Cardiac septum (tissue), 1 donor: ENCODE measurements at regions of chr5 and their contacts with region 1.

Region 1: GRCh38 chr5:35926389-35927051 is 11.9 kb downstream of the CAPSL start:
- DNase-seq: no peak

Region 2: GRCh38 chr5:35089334-35090314 is 836.9 kb before region 1 on chr5:
- intact Hi-C with region 1: loop called (anchors 2 kb)
- DNase-seq: no peak

Region 3: DNA sequence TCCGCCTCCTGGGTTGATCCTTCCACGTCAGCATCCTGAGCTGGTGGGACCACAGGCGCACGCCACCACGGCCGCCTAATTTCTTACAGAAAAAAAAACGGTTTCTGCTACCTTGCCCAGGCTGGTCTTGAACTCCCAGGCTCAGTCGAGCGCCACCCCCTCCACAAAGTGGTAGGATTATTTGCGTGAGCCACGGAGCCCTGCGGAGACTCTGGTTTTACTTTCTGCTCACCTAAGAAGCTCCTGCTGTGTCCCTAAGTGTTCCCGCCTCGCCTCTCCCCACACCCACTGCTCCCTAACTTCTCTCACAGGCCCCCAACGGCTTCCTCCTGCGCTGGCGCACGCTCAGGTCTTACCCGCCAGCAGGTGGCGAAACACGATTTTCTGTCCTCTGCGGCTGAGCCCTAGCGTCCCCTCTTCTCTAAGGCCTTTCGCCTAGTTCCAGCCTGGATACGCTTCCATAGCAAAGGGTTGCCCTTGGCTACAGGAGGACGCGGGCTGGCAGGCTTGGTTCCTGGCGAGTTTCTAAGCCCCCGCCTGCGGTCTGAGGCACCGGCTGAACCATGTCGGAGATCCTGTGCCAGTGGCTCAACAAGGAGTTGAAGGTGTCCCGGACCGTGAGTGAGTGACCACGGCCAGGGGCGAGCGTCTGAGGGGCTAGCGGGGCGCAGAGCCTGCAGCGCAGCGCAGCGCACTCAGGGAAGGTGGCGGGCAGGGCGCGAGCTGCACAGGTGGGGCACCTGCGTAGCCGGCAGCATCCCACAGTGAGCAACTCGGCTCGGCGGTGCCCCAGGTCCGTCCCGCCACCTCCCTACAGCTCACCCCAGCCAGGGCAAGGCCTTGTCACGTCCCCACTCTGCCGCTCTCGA is 308.9 kb before region 1 on chr5 and contains the start of gene SPEF2:
- intact Hi-C with region 1: loop called (anchors 5 kb)
- DNase-seq: peak; percentile 89
- total RNA-seq, gene SPEF2: 2.2 TPM

Region 4: DNA sequence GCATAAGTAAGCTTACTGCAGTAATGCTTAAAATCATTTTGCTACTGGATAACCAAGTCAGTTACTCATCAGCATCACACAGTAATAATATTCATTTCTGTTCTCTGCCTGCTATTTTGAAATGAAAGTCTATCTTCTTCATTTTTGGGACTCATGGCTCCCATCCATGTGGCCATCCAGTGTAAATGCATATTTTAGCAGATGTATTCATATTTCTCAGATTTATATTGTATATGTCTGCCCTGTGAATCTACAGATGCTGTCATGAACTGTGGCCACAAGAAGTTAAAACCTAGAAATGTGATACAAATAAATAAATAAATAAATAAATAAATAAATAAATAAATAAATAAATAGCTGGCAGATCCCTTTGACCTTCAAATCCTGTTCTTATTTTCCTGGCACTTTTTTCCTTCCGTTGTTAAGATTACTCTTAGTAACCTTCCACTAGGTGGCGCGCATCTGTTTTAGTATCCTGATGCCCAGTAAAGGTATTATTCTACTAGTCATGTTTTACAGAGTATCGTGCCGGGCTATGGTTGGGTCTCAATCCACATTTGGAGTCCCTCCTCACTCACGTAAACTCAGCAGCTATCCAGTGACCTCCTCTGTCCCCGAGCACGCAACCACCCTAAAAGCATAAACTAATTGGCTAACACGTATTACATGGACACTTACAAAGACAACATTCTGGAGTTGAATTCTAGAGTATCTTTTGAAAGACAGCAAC is 149.0 kb before region 1 on chr5:
- intact Hi-C with region 1: loop called (anchors 2 kb)
- DNase-seq: no peak

Region 5: DNA sequence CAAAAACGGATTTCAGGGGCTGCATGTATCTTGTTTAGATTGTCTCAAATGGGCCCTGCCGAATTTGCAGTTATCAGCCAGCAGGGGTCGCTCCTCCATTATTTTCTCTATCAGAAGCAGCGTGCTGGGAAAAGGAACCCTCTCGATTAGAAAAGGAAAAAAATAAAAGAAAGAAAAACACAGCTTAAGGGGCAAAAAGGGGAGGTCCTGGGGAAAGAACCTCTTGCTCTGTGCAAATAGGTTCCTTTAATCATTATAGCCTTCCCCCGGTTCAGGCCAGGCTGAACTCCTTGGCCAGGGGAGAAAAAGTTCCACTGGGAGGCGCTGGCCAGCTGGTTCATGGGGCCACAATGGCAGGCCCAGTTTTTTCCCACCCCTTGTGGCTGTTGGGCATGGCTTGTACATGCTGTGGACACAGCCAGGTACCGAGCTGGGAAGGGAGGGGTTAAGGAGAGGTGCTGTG is 36.9 kb after region 1 on chr5:
- intact Hi-C with region 1: no loop called
- DNase-seq: no peak

Region 6: GRCh38 chr5:36138900-36139683 is 212.6 kb after region 1 on chr5:
- intact Hi-C with region 1: no loop called
- DNase-seq: no peak